Endothelial cell of umbilical vein (primary cell): ENCODE measurements at regions of chr11 and their contacts with region 1.

Region 1: GRCh38 chr11:74398244-74399159 is at the start of gene PGM2L1:
- DNase-seq: peak; percentile 95
- H3K4me3 ChIP-seq: peak within 1 kb of the TSS; percentile 36 to 96 (median 73)
- H3K27ac ChIP-seq: peak within 1 kb of the TSS; percentile 67
- H3K4me1 ChIP-seq: peaks cover 12% of the 10 kb centered on the region
- H3K27me3 ChIP-seq: no peaks in the 10 kb centered on the region
- CTCF ChIP-seq: no peak
- POLR2A ChIP-seq: peak; percentile 87
- total RNA-seq, gene PGM2L1: 24.7 and 31.4 TPM in 2 replicates

Region 2: DNA sequence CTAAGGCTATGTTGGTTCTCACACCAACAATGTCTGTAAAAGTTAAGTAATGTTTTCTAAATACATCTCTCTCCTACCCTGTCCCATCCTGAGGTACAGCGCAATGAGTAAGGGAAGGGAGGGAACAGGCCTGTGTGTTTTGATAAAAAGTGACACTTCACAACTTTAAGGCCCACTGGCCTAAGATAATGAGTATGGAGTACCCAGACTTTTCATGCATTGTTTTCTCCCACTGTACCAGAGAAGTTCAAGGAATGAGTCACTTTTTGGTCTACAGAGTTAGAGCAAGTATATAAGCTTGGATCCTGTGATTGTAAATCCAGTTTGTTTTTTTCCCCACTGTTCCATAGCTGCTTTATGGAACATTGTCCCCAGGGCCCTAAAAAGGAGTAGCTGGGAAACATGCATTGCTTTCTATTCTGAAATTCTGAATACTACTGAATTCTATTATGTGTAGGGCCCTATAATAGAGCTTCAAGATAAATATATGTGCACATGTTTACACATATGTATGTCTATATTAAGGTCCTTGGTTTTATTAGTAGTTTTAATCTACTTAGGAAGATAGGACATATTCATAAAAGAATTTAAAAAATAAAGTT is 39.0 kb after region 1 on chr11:
- CTCF ChIA-PET with region 1: interaction called, 3 read pairs
- POLR2A ChIA-PET with region 1: no interaction called
- dilution Hi-C with region 1: no loop called
- intact Hi-C with region 1: loop called (anchors 2 kb)
- DNase-seq: peak; percentile 82
- H3K4me3 ChIP-seq: no peak overlapping the region
- H3K27ac ChIP-seq: peak overlapping the region; percentile 52
- H3K4me1 ChIP-seq: peaks cover 14% of the 10 kb centered on the region
- H3K27me3 ChIP-seq: no peaks in the 10 kb centered on the region
- CTCF ChIP-seq: no peak
- POLR2A ChIP-seq: no peak

Region 3: GRCh38 chr11:74480688-74481409 is 82.3 kb after region 1 on chr11:
- CTCF ChIA-PET with region 1: no interaction called
- POLR2A ChIA-PET with region 1: interaction called, 10 read pairs
- dilution Hi-C with region 1: no loop called
- intact Hi-C with region 1: no loop called
- DNase-seq: no peak
- H3K4me3 ChIP-seq: no peak overlapping the region
- H3K27ac ChIP-seq: no peak overlapping the region
- H3K4me1 ChIP-seq: no peaks in the 10 kb centered on the region
- H3K27me3 ChIP-seq: peaks cover 0 to under 1% of the 10 kb centered on the region in 2 experiments
- CTCF ChIP-seq: no peak
- POLR2A ChIP-seq: no peak